Cardiac septum (tissue), 1 donor: ENCODE measurements at regions of chr2 and their contacts with region 1.

Region 1: GRCh38 chr2:41966431-41966893 is 81.4 kb upstream of the PKDCC start:
- DNase-seq: peak; percentile 85

Region 2: DNA sequence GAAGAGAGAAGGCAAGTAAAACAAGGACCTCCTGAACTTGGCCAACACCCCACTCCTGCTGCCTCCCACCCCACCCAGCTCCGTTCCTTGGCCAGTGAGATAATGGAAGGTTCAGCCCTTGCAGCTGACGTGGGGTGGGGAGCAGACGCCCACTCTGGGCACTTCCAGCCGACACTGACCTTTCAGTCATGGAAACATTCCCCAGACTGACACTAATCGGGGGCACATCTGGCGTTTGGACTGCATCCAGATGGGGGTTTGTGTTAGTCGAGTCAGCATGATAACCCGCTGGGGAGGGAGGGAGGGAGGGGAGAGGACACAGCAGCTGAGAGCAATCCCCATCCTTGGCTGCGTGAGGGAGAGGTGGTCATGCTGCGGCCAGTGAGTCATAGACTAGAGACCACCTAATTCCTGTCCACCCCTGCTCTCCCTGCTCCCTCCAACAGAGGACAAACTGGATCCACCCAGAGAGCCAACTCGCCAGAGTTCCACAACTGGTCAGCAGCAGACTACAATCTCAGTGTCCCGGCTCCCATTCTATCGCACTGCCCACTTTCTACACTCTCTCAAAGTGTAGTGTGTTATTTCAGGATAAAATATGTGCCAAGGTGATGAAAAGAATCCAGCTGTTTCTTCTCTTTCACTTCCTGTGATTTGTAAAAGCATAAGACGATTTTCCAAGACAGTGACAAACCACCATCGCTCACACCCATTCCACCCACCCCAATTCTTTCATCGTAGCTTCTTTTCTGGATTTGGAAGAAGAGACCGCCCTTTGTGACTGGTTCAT is 34.0 kb before region 1 on chr2:
- intact Hi-C with region 1: loop called (anchors 1 kb)
- DNase-seq: peak; percentile 79